ENCODE measurements at regions of chr7 and their contacts with region 1.

Region 1: DNA sequence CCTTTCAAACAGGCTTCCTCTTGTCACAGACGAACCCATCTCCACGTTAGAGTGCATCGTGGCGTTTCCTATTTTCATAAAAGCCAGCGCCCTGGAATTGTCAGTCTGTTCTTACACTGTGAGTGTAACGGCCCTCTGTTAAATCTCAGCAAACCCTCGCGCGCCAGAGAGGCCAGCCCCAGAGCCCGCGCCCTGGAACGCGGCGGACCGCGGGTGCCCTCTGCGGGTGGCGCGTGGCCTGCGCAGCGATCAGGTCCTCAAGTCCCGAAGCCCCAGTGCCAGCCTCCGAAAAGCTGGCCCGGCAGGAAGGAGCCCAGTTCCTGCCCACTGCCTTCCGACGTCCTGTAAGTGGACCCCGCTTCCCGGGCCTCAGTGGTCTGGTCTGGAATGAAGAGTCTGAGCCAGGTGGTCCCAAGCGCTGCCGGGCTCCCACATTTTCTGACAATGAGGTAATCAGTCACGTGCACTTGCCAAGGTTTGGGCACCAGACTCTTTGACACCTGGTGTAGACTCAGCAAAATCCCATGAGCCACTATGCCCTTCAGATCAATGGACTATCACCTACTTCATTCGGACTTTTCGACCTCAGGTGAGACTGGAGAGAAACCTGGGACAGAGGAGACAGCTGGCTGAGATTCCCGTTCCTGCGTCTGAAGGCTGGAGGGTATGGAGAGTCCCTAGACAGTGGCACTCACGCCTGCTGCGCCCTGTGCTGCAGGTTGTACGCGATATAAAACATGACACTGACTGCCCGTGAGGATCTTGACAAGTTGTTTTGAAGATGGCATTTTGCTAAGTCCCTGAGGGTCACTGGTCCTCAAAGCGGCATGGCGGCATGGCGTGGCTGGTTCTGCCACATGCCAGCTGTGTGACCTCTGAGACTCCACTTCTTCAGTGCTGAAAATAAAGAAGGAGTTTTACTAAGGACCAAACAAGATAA is 109.4 kb upstream of the LANCL2 start:
- DNase-seq: no peak
- H3K4me3 ChIP-seq: peak overlapping the region; percentile 68
- CTCF ChIP-seq: peak; percentile 96

Region 2: GRCh38 chr7:54773472-54774399 is 482.0 kb before region 1 on chr7:
- CTCF ChIA-PET with region 1: interaction called, 555 read pairs
- POLR2A ChIA-PET with region 1: no interaction called
- DNase-seq: peak; percentile 38
- H3K4me3 ChIP-seq: peak overlapping the region; percentile 42
- CTCF ChIP-seq: peak; percentile 88

Region 3: GRCh38 chr7:54904130-54904529 is 351.6 kb before region 1 on chr7:
- CTCF ChIA-PET with region 1: interaction called, 14 read pairs
- POLR2A ChIA-PET with region 1: no interaction called
- DNase-seq: peak; percentile 97
- H3K4me3 ChIP-seq: no peak overlapping the region
- CTCF ChIP-seq: no peak

Region 4: DNA sequence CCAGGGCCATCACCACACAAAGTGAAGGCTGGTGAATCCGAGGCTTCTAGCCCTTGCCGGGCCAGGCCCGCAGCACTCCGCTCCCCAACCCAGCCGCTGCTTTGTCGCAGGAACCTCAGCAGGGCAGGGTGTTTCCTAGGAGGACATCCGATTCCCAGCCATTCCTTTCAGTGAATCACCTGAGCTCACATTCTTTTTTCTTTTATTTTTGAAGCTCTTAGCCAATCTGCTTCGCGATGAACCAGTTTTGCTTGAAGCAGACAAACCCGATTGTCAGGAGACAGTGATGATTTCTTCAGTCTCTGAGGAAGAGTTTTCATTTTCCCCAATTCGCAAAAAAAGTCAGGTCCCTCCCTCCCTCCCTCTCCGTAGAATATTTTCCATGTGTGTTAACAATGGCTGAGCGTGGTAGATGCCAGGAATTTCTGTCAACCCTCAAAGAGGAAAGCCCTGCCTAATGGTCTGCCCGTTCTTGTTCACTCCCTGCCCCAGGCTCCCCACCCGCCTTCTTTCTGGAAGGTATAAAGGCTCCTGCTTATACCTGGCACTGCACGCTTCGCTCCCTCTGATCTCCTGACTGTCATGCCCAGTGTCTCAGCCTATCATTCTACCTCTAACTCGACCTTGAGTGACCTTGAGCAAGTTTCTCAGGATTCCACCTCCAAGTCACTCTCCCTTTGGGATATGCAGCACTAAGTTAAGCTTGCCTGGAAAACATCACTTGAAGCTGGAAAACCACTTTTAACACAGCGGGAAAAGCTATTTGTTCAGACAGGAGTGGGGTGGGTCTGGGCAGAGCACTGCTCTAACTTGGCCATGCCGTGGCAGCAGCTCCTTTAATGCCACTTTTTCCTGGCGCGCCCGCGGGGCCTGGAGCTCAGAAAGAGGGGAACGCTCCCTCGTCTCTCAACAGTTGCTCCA is 201.9 kb before region 1 on chr7:
- CTCF ChIA-PET with region 1: interaction called, 150 read pairs
- POLR2A ChIA-PET with region 1: interaction called, 3 read pairs
- DNase-seq: no peak
- H3K4me3 ChIP-seq: no peak overlapping the region
- CTCF ChIP-seq: no peak

Region 5: DNA sequence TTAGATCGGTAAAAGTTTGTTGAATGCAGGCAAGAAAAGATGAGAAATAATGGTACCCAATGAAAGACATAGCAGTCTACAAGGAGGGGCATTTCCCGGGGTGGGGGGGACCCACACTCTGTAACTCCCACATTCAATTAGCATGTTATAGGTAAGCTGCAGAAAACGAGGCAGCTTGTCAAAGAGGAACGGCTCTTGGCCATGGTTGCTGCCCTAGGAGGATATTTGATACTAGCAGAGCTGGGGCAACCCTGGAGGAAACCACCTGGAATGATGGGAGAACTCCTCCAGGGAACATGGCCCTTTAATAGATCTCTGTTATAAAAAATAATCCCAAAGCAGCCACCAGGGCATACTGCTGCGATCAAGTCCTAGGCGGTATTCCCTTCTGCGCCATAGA is 138.5 kb before region 1 on chr7:
- CTCF ChIA-PET with region 1: interaction called, 17 read pairs
- POLR2A ChIA-PET with region 1: no interaction called
- DNase-seq: no peak
- H3K4me3 ChIP-seq: no peak overlapping the region
- CTCF ChIP-seq: no peak

Region 6: GRCh38 chr7:55212838-55213539 is 42.8 kb before region 1 on chr7:
- CTCF ChIA-PET with region 1: interaction called, 27 read pairs
- POLR2A ChIA-PET with region 1: no interaction called
- DNase-seq: no peak
- H3K4me3 ChIP-seq: no peak overlapping the region
- CTCF ChIP-seq: no peak

Region 7: DNA sequence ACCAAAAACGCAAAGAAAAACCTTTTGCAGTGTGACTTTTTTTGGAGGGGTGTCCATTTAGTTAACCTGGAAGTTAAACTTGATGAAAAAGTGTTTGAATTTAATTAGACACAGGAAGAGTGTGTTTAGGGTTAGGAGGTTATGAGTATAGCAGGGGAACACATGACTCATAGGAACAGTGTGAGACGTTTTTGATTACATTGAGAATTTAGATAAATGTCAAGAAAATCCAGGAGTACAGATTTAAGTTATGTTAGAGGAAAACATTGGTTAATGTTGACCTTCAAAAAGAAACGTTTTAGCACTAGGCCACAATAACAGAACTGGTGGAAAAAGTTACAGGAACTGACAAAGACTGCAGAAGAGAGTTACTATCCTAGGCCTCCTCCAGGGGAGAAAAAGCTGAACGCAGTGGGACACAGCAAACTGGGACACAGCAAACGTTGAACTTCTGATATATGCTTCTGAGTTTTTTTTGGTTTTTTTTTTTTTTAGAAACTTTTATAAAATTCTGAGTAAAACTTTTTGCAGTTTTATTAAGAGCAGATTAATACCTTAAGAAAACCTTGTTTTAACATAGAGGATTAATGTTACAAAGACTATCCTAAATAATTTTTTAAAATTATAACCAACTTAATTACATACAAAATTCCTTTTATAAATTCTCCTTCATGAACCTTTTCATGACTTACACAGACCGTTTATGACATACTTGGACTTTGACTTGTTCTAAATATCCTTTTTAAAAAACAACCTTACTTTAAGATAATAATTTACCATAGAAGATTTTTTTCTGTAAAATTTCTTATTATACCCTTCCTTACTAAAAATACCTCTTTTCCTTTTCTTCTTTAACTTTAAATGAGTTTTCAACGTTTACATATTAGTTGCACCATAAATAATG is 131.5 kb after region 1 on chr7:
- CTCF ChIA-PET with region 1: no interaction called
- POLR2A ChIA-PET with region 1: no interaction called
- DNase-seq: no peak
- H3K4me3 ChIP-seq: no peak overlapping the region
- CTCF ChIP-seq: no peak

Measured in AG04449 (cell line).